A549 (cell line): ENCODE measurements at regions of chr18 and their contacts with region 1.

Region 1: GRCh38 chr18:35949903-35950627 is 22.4 kb upstream of the RMP24 start:
- DNase-seq: peak; percentile 25 to 59
- ATAC-seq: peak; percentile 83 to 89
- H3K4me3 ChIP-seq: peak overlapping the region; percentile 44
- H3K27ac ChIP-seq: peak overlapping the region in 1 of 2 experiments; percentile 70; a peak in 3 of 6 replicates
- H3K4me1 ChIP-seq: no peaks in the 10 kb centered on the region
- CTCF ChIP-seq: peak; percentile 52
- EP300 ChIP-seq: no peak
- POLR2A ChIP-seq: no peak
- RAD21 ChIP-seq: peak; percentile 47 to 50; a peak in 4 of 5 replicates

Region 2: GRCh38 chr18:35730691-35731370 is 219.2 kb before region 1 on chr18:
- CTCF ChIA-PET with region 1: no interaction called
- POLR2A ChIA-PET with region 1: no interaction called
- DNase-seq: no peak
- ATAC-seq: no peak; a peak in 1 of 6 replicates
- H3K4me3 ChIP-seq: no peak overlapping the region
- H3K27ac ChIP-seq: no peak overlapping the region
- H3K4me1 ChIP-seq: no peaks in the 10 kb centered on the region
- CTCF ChIP-seq: no peak
- EP300 ChIP-seq: no peak
- POLR2A ChIP-seq: no peak
- RAD21 ChIP-seq: no peak

Region 3: GRCh38 chr18:35756506-35757117 is 193.5 kb before region 1 on chr18:
- CTCF ChIA-PET with region 1: interaction called, 13 read pairs
- POLR2A ChIA-PET with region 1: no interaction called
- DNase-seq: peak; percentile 16 to 40
- ATAC-seq: peak; percentile 76 to 87; a peak in 5 of 6 replicates
- H3K4me3 ChIP-seq: no peak overlapping the region
- H3K27ac ChIP-seq: no peak overlapping the region
- H3K4me1 ChIP-seq: no peaks in the 10 kb centered on the region
- CTCF ChIP-seq: peak; percentile 73
- EP300 ChIP-seq: no peak
- POLR2A ChIP-seq: no peak
- RAD21 ChIP-seq: peak; percentile 79 to 81

Region 4: DNA sequence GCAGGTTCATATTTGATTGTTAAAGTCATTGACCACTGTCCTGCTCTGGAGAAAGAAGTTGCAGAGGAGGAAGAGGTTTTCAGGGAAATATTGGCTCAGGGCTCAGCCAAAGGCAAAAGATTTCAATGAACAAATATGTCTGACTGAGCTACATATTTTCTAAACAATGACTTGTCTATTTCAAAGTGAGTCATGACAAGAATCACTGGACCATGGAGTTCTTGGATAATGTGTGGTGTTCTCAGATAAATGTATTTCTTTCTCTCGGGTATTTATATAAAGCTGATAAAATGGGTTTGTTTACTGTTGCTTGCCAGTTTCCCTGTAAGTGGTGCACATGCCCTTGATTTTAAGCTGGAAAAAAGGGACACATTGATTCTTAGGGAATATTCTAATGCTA is 11.9 kb before region 1 on chr18:
- CTCF ChIA-PET with region 1: interaction called, 18 read pairs
- POLR2A ChIA-PET with region 1: no interaction called
- DNase-seq: no peak
- ATAC-seq: no peak
- H3K4me3 ChIP-seq: no peak overlapping the region
- H3K27ac ChIP-seq: no peak overlapping the region; a peak in 1 of 6 replicates
- H3K4me1 ChIP-seq: no peaks in the 10 kb centered on the region
- CTCF ChIP-seq: no peak
- EP300 ChIP-seq: no peak
- POLR2A ChIP-seq: no peak
- RAD21 ChIP-seq: no peak